ENCODE measurements at regions of chr10 and their contacts with region 1.

Region 1: GRCh38 chr10:102853944-102854694 is at the start of gene BORCS7:
- DNase-seq: peak; percentile 86
- H3K4me3 ChIP-seq: peak within 1 kb of the TSS; percentile 81 to 99 (median 91)
- H3K27ac ChIP-seq: peak within 1 kb of the TSS; percentile 93
- H3K4me1 ChIP-seq: peaks cover 0 to 2% (median 0%) of the 10 kb centered on the region in 4 experiments; a peak in 2 of 7 replicates
- H3K27me3 ChIP-seq: no peaks in the 10 kb centered on the region
- CTCF ChIP-seq: no peak
- EP300 ChIP-seq: no peak
- POLR2A ChIP-seq: peak; percentile 56 to 96
- RAD21 ChIP-seq: no peak
- total RNA-seq, gene BORCS7: 2.3 and 3.7 TPM in 2 replicates

Region 2: DNA sequence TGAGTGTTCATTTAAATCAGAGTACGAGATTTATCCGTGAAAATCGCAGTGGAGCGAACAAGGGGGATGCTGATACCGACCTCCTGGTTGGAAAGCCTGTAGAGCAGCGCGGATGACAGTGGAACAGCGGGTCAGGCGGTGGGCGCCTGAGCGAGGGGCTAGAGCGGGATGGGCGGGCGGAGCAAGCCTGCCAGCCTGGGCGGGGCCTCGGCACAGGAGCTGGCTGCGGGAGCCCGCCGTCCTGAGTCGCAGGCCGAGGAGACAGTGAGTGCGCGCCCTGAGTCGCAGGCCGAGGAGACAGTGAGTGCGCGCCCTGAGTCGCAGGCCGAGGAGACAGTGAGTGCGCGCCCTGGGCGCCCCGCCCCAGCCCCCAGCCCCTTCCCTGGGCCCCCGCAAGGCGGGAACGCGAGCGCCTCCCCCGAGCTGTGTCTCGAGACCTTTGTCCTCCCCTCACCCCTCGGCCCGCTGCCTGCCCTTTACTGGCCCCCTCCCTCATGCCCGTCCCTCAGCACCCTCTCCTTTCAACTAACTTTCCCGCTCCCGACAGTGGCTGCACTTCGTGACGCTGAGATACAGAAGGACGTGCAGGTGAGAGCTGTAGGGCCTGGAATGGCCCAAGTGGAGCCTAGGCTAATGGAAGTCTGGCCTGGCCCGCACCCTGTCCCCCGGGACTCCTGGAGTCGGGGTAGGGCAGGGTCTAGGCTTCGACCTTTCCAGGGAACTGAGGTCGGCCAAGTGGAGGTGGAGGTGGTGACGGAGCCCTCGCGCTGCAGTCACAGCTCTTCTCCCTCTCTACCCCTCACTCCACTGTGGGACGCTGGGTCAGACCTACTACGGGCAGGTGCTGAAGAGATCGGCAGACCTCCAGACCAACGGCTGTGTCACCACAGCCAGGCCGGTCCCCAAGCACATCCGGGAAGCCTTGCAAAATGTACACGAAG is 15.4 kb after region 1 on chr10 and contains the start of gene AS3MT:
- CTCF ChIA-PET with region 1: interaction called, 4 read pairs
- POLR2A ChIA-PET with region 1: interaction called, 18 read pairs
- DNase-seq: peak in 1 of 2 experiments; percentile 90
- H3K4me3 ChIP-seq: peak within 1 kb of the TSS; percentile 61 to 72 (median 66)
- H3K27ac ChIP-seq: peak within 1 kb of the TSS; percentile 21
- H3K4me1 ChIP-seq: peaks cover 0 to 6% (median 3%) of the 10 kb centered on the region in 4 experiments; a peak in 5 of 7 replicates
- H3K27me3 ChIP-seq: no peaks in the 10 kb centered on the region; a peak in 1 of 7 replicates
- CTCF ChIP-seq: no peak
- EP300 ChIP-seq: no peak
- POLR2A ChIP-seq: peak in 1 of 2 experiments; percentile 74; a peak in 2 of 3 replicates
- RAD21 ChIP-seq: no peak
- total RNA-seq, gene AS3MT: 10.3 and 10.4 TPM in 2 replicates

Region 3: DNA sequence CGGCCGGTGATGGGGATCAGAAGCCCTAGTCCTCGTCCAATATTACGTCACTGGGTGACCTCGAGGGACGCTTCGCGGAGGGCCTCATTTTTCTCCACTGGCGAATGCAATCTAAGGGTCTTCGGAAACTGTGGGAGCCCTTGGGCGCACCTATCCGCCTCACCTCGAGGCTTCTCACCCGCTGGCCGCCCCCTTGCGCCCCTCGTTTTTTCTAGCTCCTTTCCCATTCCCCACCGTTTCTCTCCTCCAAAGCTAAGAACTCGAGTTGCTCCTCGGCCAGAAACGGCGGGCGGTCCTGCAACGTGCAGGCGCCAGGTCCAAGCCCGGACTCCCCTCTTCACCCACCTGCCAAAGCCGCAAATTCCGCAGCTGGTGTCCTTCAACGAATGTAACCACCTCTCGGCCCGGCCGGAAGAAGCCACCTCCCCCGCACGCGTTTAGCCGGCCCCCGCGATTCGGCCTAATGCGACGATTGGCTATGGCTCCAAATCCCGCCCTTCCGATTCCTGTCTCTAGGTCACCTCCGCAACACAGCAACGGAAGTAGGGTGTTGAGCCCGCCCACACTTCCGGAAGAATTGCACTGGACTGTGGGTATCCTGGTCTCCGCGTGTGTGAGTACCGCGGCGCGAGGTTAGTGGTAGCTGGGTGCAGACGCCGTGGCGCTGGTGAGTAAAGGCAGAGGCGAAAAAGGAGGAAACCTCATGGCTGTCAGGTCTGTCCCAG is 542.1 kb after region 1 on chr10 and contains the starts of genes ATP5MK and PDCD11:
- CTCF ChIA-PET with region 1: no interaction called
- POLR2A ChIA-PET with region 1: no interaction called
- DNase-seq: peak; percentile 85 to 91
- H3K4me3 ChIP-seq: peak within 1 kb of the TSS; percentile 96 to 99 (median 96)
- H3K27ac ChIP-seq: peak within 1 kb of the TSS; percentile 37
- H3K4me1 ChIP-seq: peaks cover 0 to 10% (median 2%) of the 10 kb centered on the region in 4 experiments; a peak in 6 of 7 replicates
- H3K27me3 ChIP-seq: no peaks in the 10 kb centered on the region
- CTCF ChIP-seq: peak in 1 of 3 experiments; percentile 17; a peak in 1 of 4 replicates
- EP300 ChIP-seq: no peak
- POLR2A ChIP-seq: peak; percentile 66 to 81
- RAD21 ChIP-seq: no peak
- total RNA-seq, gene ATP5MK: 312 and 339 TPM in 2 replicates
- total RNA-seq, gene PDCD11: 78.5 and 79.1 TPM in 2 replicates